CD14-positive monocyte (primary cell): ENCODE measurements at regions of chr3 and their contacts with region 1.

Region 1: GRCh38 chr3:73094951-73095350 is 33.5 kb downstream of the EBLN2 start:
- DNase-seq: peak in 2 of 3 donors; percentile 6 to 8
- H3K4me3 ChIP-seq: no peak overlapping the region
- H3K4me3 Mint-ChIP-seq: no peak overlapping the region
- H3K27ac ChIP-seq: peak overlapping the region in 1 of 2 donors; percentile 23
- H3K27ac Mint-ChIP-seq: peak overlapping the region in 4 of 7 donors; percentile 11 to 53 (median 22)
- H3K4me1 ChIP-seq: peaks cover 18 to 24% of the 10 kb centered on the region in 2 donors
- H3K4me1 Mint-ChIP-seq: peaks cover 29% of the 10 kb centered on the region
- H3K27me3 ChIP-seq: no peaks in the 10 kb centered on the region
- H3K27me3 Mint-ChIP-seq: no peaks in the 10 kb centered on the region
- CTCF ChIP-seq: no peak

Region 2: DNA sequence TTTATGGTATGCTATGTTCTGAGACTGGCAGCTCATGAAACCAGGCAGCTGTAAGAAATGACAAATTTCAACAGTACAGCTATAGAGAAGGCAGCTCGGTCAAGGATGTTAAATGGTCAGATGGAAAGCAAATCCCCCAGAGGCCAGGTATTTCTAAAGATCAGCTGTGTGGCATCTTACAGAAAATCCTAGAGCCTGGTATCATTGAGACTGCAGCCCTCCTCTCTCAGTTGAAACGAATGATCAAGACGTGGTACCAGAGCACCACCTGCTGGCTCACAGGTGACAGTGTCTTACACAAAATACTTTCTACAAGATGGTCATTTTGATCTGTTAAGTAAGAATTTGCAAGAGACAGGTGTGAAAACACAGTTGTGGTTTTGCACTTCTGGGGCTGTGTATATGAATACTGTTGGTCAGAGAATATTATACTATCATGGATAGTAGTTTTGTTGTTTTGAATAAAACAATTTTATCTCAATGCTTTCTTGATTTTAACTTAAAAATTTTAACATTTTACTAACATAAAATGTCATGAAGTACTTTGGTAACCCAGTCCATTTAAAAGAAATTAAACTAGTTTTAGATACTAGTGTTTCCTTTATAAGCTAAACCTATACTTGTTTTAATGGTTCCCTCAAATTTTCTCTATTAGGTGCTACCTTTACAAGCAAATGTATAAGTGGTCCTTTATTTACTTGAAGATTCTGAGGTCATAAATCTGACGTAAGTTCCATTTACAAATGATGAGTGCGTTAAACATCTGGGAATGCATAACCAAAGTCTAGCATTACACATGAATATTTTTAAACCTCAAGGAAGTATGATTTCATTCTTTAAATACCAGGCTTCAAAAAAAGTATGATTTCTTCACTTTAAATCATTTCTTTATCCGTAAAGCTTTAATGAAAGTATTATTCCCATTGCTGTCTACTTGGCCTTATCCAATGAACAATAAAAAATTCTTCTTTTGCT is 407.9 kb after region 1 on chr3:
- intact Hi-C with region 1: loop called (anchors 5 kb)
- DNase-seq: peak; percentile 9 to 20 (median 11)
- H3K4me3 ChIP-seq: no peak overlapping the region
- H3K4me3 Mint-ChIP-seq: no peak overlapping the region
- H3K27ac ChIP-seq: no peak overlapping the region
- H3K27ac Mint-ChIP-seq: no peak overlapping the region
- H3K4me1 ChIP-seq: no peaks in the 10 kb centered on the region
- H3K4me1 Mint-ChIP-seq: no peaks in the 10 kb centered on the region
- H3K27me3 ChIP-seq: no peaks in the 10 kb centered on the region
- H3K27me3 Mint-ChIP-seq: peaks cover 0 to 9% (median 8%) of the 10 kb centered on the region in 3 donors
- CTCF ChIP-seq: peak; percentile 68